ENCODE measurements at regions of chr17 and their contacts with region 1.

Region 1: DNA sequence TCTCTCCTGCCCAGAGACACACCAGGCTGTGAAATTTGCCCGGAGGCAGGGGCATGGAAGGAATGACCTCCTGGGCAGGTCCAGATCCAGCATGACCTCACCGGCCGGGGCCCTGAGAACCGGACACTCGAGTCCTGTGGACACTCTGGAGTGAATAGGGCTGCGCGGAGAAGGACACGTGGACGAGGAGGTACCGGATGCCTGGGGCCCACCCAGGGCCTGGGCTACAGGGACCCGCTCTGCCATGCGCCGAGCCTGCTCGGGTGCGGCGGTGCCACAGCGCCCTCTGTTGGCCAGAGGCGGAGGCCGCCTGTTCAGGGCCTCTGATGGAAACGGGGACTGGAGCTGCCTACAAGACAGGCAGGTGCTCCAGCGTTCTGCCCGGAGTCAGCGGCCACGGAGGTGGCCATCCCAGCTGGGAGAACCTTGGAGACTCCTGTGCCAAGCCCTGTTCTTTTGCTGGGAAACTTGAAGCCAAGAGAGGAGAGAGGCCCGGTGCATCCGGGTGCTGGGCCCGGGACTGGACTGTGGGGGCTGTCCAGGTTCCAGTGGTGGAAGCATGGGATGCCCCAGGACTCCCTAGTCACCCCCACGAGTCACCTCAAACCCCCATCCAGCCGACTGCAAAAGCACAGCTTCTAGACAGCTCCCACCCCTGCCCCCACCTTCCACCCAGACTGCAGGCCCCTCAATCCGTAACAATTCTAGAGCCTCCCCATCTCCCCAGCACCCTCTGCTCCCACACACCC is 19.3 kb upstream of the NXPH3 start:
- DNase-seq: peak; percentile 63 to 88 (median 77)
- ATAC-seq: peak; percentile 96
- H3K4me3 ChIP-seq: no peak overlapping the region
- H3K4me3 Mint-ChIP-seq: no peak overlapping the region
- H3K27ac ChIP-seq: no peak overlapping the region
- H3K27ac Mint-ChIP-seq: no peak overlapping the region
- H3K4me1 ChIP-seq: peaks cover 12% of the 10 kb centered on the region
- H3K4me1 Mint-ChIP-seq: peaks cover 6% of the 10 kb centered on the region
- H3K27me3 ChIP-seq: no peaks in the 10 kb centered on the region
- H3K27me3 Mint-ChIP-seq: peaks cover 9% of the 10 kb centered on the region
- CTCF ChIP-seq: peak; percentile 97

Region 2: GRCh38 chr17:49407981-49408501 is 148.4 kb before region 1 on chr17:
- CTCF ChIA-PET with region 1: interaction called, 21 read pairs
- POLR2A ChIA-PET with region 1: no interaction called
- intact Hi-C with region 1: loop called (anchors 1 kb)
- DNase-seq: peak; percentile 71 to 89 (median 81)
- ATAC-seq: peak; percentile 100
- H3K4me3 ChIP-seq: no peak overlapping the region
- H3K4me3 Mint-ChIP-seq: peak overlapping the region; percentile 61
- H3K27ac ChIP-seq: no peak overlapping the region
- H3K27ac Mint-ChIP-seq: no peak overlapping the region
- H3K4me1 ChIP-seq: peaks cover 18% of the 10 kb centered on the region
- H3K4me1 Mint-ChIP-seq: peaks cover 22% of the 10 kb centered on the region
- H3K27me3 ChIP-seq: no peaks in the 10 kb centered on the region
- H3K27me3 Mint-ChIP-seq: no peaks in the 10 kb centered on the region
- CTCF ChIP-seq: peak; percentile 95

Region 3: GRCh38 chr17:49434821-49435670 is 121.4 kb before region 1 on chr17:
- CTCF ChIA-PET with region 1: interaction called, 5 read pairs
- POLR2A ChIA-PET with region 1: no interaction called
- intact Hi-C with region 1: loop called (anchors 1 kb)
- DNase-seq: peak in 11 of 14 experiments; percentile 8 to 69 (median 19)
- ATAC-seq: no peak
- H3K4me3 ChIP-seq: no peak overlapping the region
- H3K4me3 Mint-ChIP-seq: no peak overlapping the region
- H3K27ac ChIP-seq: no peak overlapping the region
- H3K27ac Mint-ChIP-seq: no peak overlapping the region
- H3K4me1 ChIP-seq: no peaks in the 10 kb centered on the region
- H3K4me1 Mint-ChIP-seq: no peaks in the 10 kb centered on the region
- H3K27me3 ChIP-seq: peaks cover 19 to 21% of the 10 kb centered on the region in 2 experiments
- H3K27me3 Mint-ChIP-seq: peaks cover 40% of the 10 kb centered on the region
- CTCF ChIP-seq: peak; percentile 72

Region 4: DNA sequence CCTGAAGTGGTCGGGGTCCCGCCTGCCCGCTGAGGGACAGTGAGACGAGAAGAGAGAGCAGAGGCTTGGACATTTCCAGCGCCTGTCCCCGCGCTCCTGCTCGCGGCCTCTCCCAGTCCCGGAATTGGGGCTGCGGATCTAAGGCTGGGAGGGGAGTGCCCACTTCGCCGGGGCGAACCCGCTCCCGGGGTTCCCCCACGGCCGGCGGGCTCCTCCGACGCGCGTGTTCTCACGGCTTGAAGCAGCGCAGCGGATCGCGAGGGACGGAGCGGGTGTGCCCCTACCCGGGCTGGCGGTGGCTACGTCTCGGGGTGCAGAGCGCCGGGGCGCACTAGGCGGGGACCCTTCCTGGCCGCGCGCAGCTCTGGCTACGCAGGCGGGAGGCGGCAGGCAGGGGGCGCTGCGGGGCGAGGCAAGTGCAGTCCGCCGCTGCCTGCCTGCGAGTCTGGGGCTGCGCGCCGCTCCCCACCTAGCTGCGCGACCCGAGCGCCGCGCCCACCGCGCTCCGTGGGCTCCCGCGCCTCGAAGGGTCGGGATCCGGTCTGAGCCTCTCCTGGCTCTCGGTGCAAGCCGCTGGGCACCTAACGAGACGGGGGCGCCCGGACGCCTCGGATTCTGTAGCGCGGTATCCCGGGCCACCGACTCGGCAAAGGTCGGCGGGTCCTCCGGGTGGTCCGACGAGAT is 60.1 kb before region 1 on chr17:
- CTCF ChIA-PET with region 1: interaction called, 28 read pairs
- POLR2A ChIA-PET with region 1: interaction called, 5 read pairs
- intact Hi-C with region 1: loop called (anchors 1 kb)
- DNase-seq: peak; percentile 72 to 91 (median 82)
- ATAC-seq: peak; percentile 87
- H3K4me3 ChIP-seq: peak overlapping the region; percentile 57
- H3K4me3 Mint-ChIP-seq: peak overlapping the region; percentile 80
- H3K27ac ChIP-seq: no peak overlapping the region
- H3K27ac Mint-ChIP-seq: no peak overlapping the region
- H3K4me1 ChIP-seq: peaks cover 36% of the 10 kb centered on the region
- H3K4me1 Mint-ChIP-seq: peaks cover 35% of the 10 kb centered on the region
- H3K27me3 ChIP-seq: peaks cover 40 to 50% of the 10 kb centered on the region in 2 experiments
- H3K27me3 Mint-ChIP-seq: peaks cover 54% of the 10 kb centered on the region
- CTCF ChIP-seq: peak; percentile 79

Region 5: DNA sequence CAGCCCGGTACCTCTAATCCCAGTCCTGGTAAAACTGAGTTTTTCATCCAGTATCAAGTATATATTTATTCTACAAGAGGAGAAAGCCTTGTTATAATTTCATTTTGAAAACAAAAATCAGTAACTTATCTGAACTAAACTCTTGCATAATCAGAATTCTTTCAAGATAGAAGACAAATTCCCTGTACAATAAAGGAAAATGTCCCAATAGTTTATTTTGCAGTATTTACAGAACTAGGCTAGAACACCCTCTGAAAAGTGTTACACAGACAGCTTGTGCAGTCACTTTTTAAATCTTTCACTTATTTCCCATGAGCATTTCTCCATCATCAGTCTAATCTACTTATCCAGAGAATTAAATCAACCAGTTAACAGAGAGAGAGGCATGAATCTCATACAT is 73.0 kb after region 1 on chr17:
- CTCF ChIA-PET with region 1: no interaction called
- POLR2A ChIA-PET with region 1: no interaction called
- intact Hi-C with region 1: no loop called
- DNase-seq: no peak
- ATAC-seq: no peak
- H3K4me3 ChIP-seq: no peak overlapping the region
- H3K4me3 Mint-ChIP-seq: no peak overlapping the region
- H3K27ac ChIP-seq: no peak overlapping the region
- H3K27ac Mint-ChIP-seq: peak overlapping the region; percentile 19
- H3K4me1 ChIP-seq: no peaks in the 10 kb centered on the region
- H3K4me1 Mint-ChIP-seq: peaks cover 62% of the 10 kb centered on the region
- H3K27me3 ChIP-seq: no peaks in the 10 kb centered on the region
- H3K27me3 Mint-ChIP-seq: no peaks in the 10 kb centered on the region
- CTCF ChIP-seq: no peak

Measured in CD4-positive, alpha-beta T cell (primary cell).